WTC11 (cell line): ENCODE measurements at regions of chr19 and their contacts with region 1.

Region 1: DNA sequence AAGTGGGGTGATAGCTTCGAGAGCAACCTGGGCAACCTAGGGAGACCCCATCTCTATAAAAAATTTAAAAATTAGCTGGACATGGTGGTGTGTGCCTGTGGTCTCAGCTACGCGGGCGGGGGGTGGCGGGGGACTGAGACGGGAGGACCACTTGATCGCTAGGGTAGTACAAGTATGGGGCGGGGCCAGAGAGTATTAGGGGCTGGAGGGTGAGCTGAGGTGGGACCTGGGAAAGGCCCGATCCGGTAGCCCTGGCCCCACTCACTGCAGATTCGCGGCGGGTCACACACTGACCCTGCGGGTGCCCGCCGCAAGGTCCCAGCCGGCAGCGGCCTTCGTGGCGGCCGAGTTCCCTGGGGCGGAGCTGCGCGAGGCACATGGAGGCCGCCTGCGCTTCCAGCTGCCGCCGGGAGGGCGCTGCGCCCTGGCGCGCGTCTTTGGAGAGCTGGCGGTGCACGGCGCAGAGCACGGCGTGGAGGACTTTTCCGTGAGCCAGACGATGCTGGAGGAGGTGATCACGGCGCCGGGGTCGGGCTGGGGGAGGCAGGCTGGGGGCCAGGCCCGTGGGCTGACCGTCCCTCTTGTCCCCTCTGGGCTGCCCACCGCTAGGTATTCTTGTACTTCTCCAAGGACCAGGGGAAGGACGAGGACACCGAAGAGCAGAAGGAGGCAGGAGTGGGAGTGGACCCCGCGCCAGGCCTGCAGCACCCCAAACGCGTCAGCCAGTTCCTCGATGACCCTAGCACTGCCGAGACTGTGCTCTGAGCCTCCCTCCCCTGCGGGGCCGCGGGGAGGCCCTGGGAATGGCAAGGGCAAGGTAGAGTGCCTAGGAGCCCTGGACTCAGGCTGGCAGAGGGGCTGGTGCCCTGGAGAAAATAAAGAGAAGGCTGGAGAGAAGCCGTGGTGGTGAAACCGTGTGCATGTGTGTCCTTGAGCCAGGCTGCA is 2.0 kb upstream of the ARHGAP45 start:
- DNase-seq: peak; percentile 80
- ATAC-seq: peak; percentile 61
- H3K4me3 Mint-ChIP-seq: peak overlapping the region; percentile 65
- H3K27ac Mint-ChIP-seq: no peak overlapping the region; the same call in 1 of the 2 replicates
- H3K4me1 Mint-ChIP-seq: peaks cover 17% of the 10 kb centered on the region
- H3K27me3 Mint-ChIP-seq: peaks cover 26% of the 10 kb centered on the region
- CTCF ChIP-seq: peak; percentile 55

Region 2: GRCh38 chr19:814258-815078 is 250.5 kb before region 1 on chr19:
- CTCF ChIA-PET with region 1: no interaction called
- POLR2A ChIA-PET with region 1: no interaction called
- DNase-seq: no peak
- ATAC-seq: 0 out of 2 replicates have a peak, but pooled peaks have one; percentile 1
- H3K4me3 Mint-ChIP-seq: no peak overlapping the region
- H3K27ac Mint-ChIP-seq: peak overlapping the region; percentile 53; the same call in 1 of the 2 replicates
- H3K4me1 Mint-ChIP-seq: no peaks in the 10 kb centered on the region
- H3K27me3 Mint-ChIP-seq: no peaks in the 10 kb centered on the region
- CTCF ChIP-seq: no peak

Region 3: GRCh38 chr19:913080-913748 is 151.7 kb before region 1 on chr19 and contains the start of gene R3HDM4:
- CTCF ChIA-PET with region 1: no interaction called
- POLR2A ChIA-PET with region 1: no interaction called
- DNase-seq: peak; percentile 64
- ATAC-seq: peak; percentile 43
- H3K4me3 Mint-ChIP-seq: peak within 1 kb of the TSS; percentile 70
- H3K27ac Mint-ChIP-seq: no peak within 1 kb of the TSS
- H3K4me1 Mint-ChIP-seq: no peaks in the 10 kb centered on the region
- H3K27me3 Mint-ChIP-seq: peaks cover 35% of the 10 kb centered on the region
- CTCF ChIP-seq: no peak
- total RNA-seq, gene R3HDM4: 85.5 to 99.5 TPM (median 88.3 TPM) in 3 replicates

Region 4: DNA sequence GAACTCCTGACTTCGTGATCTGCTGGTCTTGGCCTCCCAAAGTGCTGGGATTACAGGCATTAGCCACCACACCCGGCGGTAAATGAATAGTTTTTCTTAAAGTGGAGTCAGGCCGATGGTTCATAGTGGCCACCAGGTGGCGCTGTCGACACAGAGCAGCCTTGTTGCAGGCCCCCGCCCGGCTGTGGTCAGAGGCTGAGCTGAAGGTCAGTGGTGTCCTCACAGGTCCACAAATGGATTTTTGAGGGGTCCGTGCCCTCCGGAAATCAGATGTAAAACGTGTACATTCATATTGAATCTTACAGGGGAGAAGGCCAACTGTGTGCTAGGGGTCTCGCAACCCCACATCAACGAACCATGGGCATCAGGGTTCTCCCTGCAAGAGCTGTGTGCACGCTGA is 94.2 kb before region 1 on chr19:
- CTCF ChIA-PET with region 1: no interaction called
- POLR2A ChIA-PET with region 1: no interaction called
- DNase-seq: no peak
- ATAC-seq: 0 out of 2 replicates have a peak, but pooled peaks have one; percentile 32
- H3K4me3 Mint-ChIP-seq: no peak overlapping the region
- H3K27ac Mint-ChIP-seq: no peak overlapping the region
- H3K4me1 Mint-ChIP-seq: peaks cover 3% of the 10 kb centered on the region; the same call in 1 of the 2 replicates
- H3K27me3 Mint-ChIP-seq: no peaks in the 10 kb centered on the region
- CTCF ChIP-seq: peak; percentile 87

Region 5: DNA sequence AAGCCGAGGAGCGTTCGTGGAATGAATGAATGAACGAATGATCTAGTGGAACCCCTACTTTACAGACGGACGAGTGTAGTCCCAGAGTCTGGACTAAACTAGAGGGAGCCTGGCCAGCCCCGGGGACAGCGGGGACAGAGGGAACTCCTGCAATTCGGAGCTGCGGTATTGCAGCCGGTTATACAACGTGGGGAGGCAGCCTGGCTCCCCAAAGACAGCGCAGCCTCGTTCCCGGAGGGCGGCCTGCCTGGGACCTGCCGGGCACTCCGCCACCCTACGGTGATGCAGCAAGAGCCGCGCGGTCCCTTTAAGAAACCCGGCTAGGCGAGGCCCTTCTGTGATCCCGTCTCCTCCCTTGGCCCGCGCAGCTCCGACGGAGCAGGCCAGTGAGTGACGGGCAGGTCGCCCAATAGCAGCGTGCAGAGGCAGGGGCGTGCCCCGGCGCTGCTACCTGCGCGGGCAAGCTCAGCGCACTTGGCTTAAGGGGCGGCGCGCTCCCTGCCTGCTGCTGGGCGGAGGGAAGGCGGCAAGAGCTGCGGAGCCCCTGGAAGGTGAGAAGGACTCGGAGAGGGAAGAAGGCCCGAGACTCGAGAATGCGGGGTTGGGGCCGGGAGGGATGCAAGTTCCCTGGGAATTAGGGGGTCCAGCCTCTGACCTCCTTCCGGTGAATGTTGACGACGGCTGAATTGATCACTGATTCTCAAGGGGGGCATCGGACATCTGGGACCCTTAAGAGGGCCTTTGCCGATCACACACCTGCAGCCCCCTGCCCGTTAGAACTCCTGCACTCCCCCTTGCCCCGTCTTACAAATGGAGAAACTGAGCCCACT is 25.1 kb before region 1 on chr19 and contains the start of gene ABCA7:
- CTCF ChIA-PET with region 1: interaction called, 29 read pairs
- POLR2A ChIA-PET with region 1: interaction called, 14 read pairs
- DNase-seq: peak; percentile 100
- ATAC-seq: peak; percentile 84
- H3K4me3 Mint-ChIP-seq: peak within 1 kb of the TSS; percentile 84
- H3K27ac Mint-ChIP-seq: peak within 1 kb of the TSS; percentile 90
- H3K4me1 Mint-ChIP-seq: peaks cover 12% of the 10 kb centered on the region
- H3K27me3 Mint-ChIP-seq: no peaks in the 10 kb centered on the region
- CTCF ChIP-seq: no peak
- total RNA-seq, gene ABCA7: 40.3 to 45.0 TPM (median 41.3 TPM) in 3 replicates

Region 6: DNA sequence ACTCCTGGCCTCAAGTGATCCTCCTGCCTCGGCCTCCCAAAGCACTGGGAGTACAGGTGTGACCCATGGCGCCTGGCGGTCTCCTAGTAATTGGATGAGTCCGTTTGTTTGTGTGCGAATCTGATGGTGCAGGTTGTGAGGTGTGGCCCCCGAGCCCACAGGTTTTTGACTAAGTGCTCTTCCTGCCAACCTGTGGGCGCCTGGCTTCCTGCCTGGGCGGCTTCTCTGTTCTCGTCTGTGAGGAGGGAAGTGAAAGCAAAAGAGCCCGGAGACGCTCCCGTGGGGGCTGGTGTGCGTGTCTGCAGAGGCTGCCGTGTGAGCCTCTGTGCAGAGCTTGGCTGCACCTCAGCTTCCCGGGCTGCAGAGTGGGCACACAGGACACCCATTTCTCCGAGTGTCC is 12.0 kb after region 1 on chr19:
- CTCF ChIA-PET with region 1: interaction called, 109 read pairs
- POLR2A ChIA-PET with region 1: interaction called, 22 read pairs
- DNase-seq: no peak
- ATAC-seq: no peak
- H3K4me3 Mint-ChIP-seq: no peak overlapping the region
- H3K27ac Mint-ChIP-seq: no peak overlapping the region
- H3K4me1 Mint-ChIP-seq: peaks cover under 1% of the 10 kb centered on the region
- H3K27me3 Mint-ChIP-seq: peaks cover 3% of the 10 kb centered on the region
- CTCF ChIP-seq: no peak

Region 7: DNA sequence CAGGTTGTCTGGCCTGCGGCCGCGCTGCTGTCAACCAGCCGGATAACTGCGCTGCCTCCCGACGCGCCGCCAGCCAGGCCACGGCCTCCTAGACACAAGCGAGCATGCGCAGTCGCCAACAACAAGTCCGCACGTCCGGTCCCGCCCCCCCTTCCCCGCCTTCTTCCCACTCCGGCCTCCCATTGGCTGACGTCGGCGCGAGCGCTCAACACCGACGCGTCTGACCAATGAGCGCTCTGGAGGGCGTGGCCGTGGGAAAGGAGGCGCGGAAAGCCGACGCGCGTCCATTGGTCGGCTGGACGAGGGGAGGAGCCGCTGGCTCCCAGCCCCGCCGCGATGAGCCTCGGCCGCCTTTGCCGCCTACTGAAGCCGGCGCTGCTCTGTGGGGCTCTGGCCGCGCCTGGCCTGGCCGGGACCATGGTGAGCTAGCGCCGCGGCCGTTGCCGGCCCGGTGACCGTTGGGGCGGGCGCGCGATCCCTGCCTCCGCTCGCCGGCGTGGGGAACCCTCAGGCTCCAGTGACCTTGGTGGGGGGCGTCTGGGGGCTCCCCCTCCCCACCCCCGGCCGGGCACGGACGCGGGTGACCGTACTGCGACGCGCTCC is 38.9 kb after region 1 on chr19 and contains the start of gene GPX4:
- CTCF ChIA-PET with region 1: interaction called, 27 read pairs
- POLR2A ChIA-PET with region 1: interaction called, 7 read pairs
- DNase-seq: peak; percentile 98
- ATAC-seq: peak; percentile 84
- H3K4me3 Mint-ChIP-seq: peak within 1 kb of the TSS; percentile 71
- H3K27ac Mint-ChIP-seq: peak within 1 kb of the TSS; percentile 72; the same call in 1 of the 2 replicates
- H3K4me1 Mint-ChIP-seq: peaks cover 15% of the 10 kb centered on the region
- H3K27me3 Mint-ChIP-seq: no peaks in the 10 kb centered on the region
- CTCF ChIP-seq: no peak
- total RNA-seq, gene GPX4: 363 to 377 TPM (median 368 TPM) in 3 replicates

Region 8: GRCh38 chr19:1269065-1269477 is 204.1 kb after region 1 on chr19 and contains the start of gene CIRBP:
- CTCF ChIA-PET with region 1: interaction called, 12 read pairs
- POLR2A ChIA-PET with region 1: interaction called, 6 read pairs
- DNase-seq: peak; percentile 100
- ATAC-seq: peak; percentile 74
- H3K4me3 Mint-ChIP-seq: peak within 1 kb of the TSS; percentile 79
- H3K27ac Mint-ChIP-seq: peak within 1 kb of the TSS; percentile 97
- H3K4me1 Mint-ChIP-seq: peaks cover 60% of the 10 kb centered on the region
- H3K27me3 Mint-ChIP-seq: peaks cover 7% of the 10 kb centered on the region
- CTCF ChIP-seq: no peak
- total RNA-seq, gene CIRBP: 256 to 298 TPM (median 256 TPM) in 3 replicates